Right cardiac atrium (tissue), 5 donors: ENCODE measurements at regions of chr2 and their contacts with region 1.

Region 1: DNA sequence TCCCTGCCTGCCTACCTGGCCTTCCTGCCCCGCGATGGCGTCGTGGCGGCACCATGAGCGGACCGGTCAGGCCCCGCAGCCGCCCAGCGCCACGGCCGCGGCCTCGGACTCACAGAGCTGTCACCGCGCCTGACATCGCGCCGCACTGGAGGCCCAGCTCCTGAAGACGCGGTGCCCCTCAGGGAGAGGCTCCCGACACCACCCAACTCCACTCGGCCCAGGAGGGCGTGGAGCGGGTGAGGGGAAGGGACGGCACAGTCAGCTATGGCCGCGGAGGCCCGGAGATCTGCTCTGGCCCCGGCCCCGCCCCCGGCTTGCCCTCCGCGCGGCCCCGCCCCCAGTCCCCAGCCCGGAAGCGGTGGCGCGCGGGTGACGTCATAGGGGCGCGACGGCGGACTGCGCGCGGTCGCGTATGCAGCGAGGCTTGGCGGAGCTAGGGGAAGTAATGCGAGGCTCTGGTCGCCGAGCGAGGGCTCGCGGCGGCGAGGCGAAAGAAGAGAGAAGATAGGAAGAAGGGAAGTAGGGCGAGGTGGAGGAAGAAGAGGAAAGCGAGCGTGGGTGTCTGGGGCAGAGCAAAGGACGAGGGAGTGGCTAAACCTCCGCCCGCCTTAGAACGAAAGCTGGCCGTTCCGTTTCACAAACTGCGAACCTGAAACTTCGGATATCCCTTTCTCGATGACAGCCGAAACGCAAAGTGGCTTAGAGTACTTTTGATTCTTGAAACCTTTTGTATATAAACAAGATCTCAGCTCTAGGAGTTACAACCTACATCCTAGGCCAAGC is at the start of gene SLC35F5:
- DNase-seq: peak; percentile 92 to 98 (median 98)
- ATAC-seq: peak; percentile 100
- H3K4me3 ChIP-seq: peak within 1 kb of the TSS; percentile 53
- H3K27ac ChIP-seq: peak within 1 kb of the TSS; percentile 96
- H3K4me1 ChIP-seq: no peaks in the 10 kb centered on the region
- H3K27me3 ChIP-seq: no peaks in the 10 kb centered on the region
- total RNA-seq, gene SLC35F5: 51.2 to 60.2 (median 56.3) TPM

Region 2: GRCh38 chr2:113889471-113890252 is 133.1 kb after region 1 on chr2 and contains the start of gene ACTR3:
- intact Hi-C with region 1: loop called in 3 of 4 experiments (anchors 2 to 10 kb)
- DNase-seq: peak; percentile 98 to 99 (median 99)
- ATAC-seq: peak; percentile 99
- H3K4me3 ChIP-seq: peak within 1 kb of the TSS; percentile 99
- H3K27ac ChIP-seq: peak within 1 kb of the TSS; percentile 99
- H3K4me1 ChIP-seq: peaks cover 3% of the 10 kb centered on the region
- H3K27me3 ChIP-seq: no peaks in the 10 kb centered on the region
- total RNA-seq, gene ACTR3: 120 to 168 (median 137) TPM